ENCODE measurements at regions of chr10 and their contacts with region 1.

Region 1: DNA sequence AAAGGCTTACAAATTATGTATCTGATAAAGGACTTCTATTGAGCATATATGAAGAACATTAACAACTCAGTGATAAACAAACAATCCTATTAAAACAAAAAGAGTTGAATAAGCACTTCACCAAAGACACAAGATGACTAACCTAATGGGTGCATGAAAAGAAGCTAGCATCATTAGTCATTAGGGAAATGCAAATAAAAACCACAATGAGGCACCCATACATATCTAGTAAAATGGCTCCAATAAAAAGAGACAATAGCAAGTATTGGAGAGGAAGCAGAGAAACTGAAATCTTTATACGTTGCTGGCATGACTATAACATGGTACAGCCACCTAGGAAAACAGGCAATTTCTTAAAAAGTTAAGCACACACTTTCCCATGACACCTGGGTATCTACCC is 77.6 kb upstream of the ZMIZ1 start:
- DNase-seq: no peak
- H3K4me3 ChIP-seq: no peak overlapping the region
- H3K27ac ChIP-seq: no peak overlapping the region
- H3K27me3 ChIP-seq: no peaks in the 10 kb centered on the region
- CTCF ChIP-seq: no peak

Region 2: DNA sequence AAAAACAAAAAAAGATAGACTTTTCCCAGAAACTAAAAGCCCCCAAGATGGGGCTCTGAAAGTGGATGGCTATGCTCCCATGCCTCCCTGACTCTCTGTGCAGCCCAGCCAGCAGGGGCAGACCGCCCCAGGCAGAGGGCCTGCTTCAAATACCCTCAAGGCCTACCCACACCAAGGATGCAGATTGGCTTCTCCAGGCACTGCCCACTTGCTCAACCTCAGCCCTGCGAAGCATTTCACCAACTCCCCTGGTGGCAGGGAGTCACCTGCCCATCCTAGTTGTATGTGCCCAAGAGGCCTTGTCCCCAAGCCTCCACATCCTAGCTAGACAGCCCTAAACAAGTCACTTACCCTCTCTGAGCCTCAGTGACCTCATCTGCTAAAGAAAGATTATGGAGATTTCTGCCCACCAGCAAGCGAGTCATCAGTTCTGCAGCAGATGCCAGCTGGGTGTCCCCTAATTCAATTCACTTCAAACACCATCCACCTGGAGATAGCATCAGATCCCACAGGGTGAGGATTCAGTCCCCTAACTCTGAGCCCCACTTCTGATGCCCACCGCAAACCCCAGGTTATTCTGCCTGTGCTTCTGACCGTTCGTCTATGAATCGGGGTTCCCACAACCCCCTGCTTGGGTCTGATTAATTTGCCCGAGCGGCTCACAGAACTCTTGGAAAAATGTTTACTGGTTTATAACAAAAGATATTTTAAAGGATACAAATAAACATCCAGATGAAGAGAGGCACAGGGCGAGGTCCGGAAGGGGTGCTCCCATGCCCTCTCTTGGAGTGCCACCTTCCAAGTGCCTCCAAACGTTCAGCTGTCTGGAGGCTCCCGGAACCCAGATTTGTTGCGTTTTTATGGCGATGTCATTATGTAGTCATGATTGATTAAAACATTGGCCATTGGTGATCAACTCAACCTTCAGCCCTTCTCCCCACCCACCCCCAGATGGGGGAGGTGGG is 59.0 kb after region 1 on chr10:
- CTCF ChIA-PET with region 1: interaction called, 12 read pairs
- POLR2A ChIA-PET with region 1: no interaction called
- DNase-seq: no peak
- H3K4me3 ChIP-seq: no peak overlapping the region
- H3K27ac ChIP-seq: no peak overlapping the region
- H3K27me3 ChIP-seq: peaks cover 4% of the 10 kb centered on the region
- CTCF ChIP-seq: no peak

Measured in AG04450 (cell line).